Heart right ventricle (tissue), 16 donors: ENCODE measurements at regions of chr22 and their contacts with region 1.

Region 1: DNA sequence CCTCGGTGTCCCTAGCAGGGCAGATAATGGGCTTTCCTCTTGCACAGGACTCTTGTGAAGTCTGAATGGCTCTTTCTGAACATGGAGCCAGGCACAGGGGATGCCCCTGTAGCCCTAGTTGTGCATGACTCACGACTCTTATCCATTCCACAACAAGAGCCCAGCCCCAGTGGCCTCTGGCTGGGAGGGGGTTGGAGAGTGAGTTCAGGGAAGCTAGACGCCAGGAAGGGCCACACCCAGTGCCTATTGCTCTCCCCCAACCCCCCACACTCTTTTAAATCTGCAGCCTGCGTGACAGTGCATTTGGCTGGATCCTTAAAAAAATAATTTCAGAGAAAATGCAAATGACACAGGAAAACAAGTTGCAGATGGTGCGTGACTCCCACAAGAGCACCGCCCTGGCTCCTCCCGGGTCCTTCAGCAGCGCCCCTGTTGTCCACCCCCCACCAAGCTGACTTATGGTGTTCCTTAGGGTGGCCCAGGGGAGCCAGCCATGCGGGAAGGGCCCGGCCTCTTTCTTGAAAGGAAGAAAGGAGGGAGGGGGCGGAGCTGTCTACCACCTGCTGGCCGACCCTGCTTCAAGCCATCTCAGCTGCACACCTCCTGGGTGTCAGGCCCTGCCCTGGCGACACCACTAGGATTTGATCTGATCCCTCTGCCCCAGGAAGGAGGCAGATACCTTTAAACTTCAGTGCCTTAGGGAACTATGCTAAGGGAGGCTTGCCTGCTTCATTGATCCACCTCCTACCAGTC is 74.7 kb downstream of the MN1 start:
- DNase-seq: peak; percentile 70 to 79
- ATAC-seq: peak; percentile 80 to 96 (median 94)
- H3K4me3 ChIP-seq: peak overlapping the region in 3 of 10 donors; percentile 8 to 12 (median 8)
- H3K27ac ChIP-seq: peak overlapping the region; percentile 70 to 92 (median 90)
- H3K4me1 ChIP-seq: peaks cover 4 to 35% (median 20%) of the 10 kb centered on the region in 9 donors
- H3K27me3 ChIP-seq: no peaks in the 10 kb centered on the region
- CTCF ChIP-seq: peak in 1 of 9 donors; percentile 6

Region 2: GRCh38 chr22:27682437-27682836 is 44.4 kb before region 1 on chr22:
- intact Hi-C with region 1: no loop called
- DNase-seq: no peak
- ATAC-seq: no peak
- H3K4me3 ChIP-seq: no peak overlapping the region
- H3K27ac ChIP-seq: no peak overlapping the region
- H3K4me1 ChIP-seq: peaks cover 2 to 27% (median 21%) of the 10 kb centered on the region in 9 donors
- H3K27me3 ChIP-seq: no peaks in the 10 kb centered on the region
- CTCF ChIP-seq: peak in 4 of 9 donors; percentile 14 to 22 (median 17)

Region 3: DNA sequence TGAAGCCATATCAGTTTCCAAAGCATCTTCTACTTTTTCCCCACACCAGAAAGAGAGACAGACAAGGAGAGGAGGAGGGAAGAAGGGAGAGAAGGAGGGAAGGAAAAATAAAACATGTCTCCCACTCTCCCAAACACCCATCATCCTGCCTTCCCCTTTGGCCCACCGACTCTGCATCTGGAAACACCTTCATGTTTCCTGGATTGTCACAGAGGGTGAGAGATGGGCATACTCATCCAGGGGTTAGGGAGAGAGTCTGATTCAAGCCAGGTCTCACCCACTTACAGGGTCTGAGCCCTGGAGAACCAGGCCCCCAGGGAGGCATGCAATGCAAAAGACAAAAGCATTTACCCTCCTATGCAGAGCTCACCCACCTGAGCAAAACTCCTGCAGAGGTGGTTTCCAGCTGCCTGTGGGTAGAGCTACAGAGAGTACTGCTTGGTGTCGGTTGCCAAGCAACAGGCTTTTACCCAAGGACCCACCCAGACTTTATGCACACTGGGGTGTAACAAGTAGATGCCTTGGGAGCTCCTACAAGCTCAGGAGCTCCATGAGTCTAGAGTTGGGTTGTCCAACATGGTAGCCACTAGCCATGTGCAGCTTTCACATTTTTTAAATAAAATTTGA is 41.3 kb after region 1 on chr22:
- intact Hi-C with region 1: no loop called
- DNase-seq: no peak
- ATAC-seq: no peak
- H3K4me3 ChIP-seq: no peak overlapping the region
- H3K27ac ChIP-seq: no peak overlapping the region
- H3K4me1 ChIP-seq: peaks cover 0 to 4% (median 0%) of the 10 kb centered on the region in 9 donors
- H3K27me3 ChIP-seq: no peaks in the 10 kb centered on the region
- CTCF ChIP-seq: no peak

Region 4: DNA sequence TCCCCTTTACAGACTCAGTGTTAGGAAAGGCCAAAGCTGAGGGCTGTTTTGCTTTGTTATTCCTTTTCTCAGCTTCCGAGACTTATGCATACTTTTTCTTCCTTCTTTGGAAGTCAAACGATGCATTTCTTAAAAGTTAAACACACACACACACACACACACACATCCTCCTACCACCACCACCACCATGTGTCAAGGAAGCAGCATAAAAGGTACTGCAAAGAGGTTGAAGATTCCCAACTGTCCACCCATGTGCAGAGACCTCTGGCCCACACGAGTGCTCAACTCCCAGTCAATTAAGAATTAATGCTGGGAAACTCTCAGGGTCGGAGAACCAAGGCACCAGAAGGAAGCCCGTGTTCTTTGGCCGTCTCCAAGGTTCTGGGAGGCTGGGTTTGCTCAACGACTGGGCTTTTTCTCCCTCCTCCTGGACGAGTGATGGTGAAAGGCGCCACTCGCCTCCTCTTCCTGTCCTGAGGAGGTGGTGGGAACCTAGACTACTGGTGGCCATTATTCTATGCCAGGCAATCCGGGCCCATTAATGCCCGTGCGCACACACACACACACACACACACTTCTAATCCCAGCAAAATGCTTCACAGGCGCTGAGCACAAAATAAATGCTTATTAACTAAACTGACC is 59.5 kb after region 1 on chr22:
- intact Hi-C with region 1: loop called in 2 of 10 experiments (anchors 5 to 10 kb)
- DNase-seq: no peak
- ATAC-seq: peak in 4 of 8 donors; percentile 20 to 27 (median 20)
- H3K4me3 ChIP-seq: peak overlapping the region in 1 of 10 donors; percentile 25
- H3K27ac ChIP-seq: peak overlapping the region in 7 of 10 donors; percentile 1 to 75 (median 59)
- H3K4me1 ChIP-seq: peaks cover 0 to 51% (median 13%) of the 10 kb centered on the region in 9 donors
- H3K27me3 ChIP-seq: peaks cover 0 to 5% (median 0%) of the 10 kb centered on the region in 7 donors
- CTCF ChIP-seq: no peak

Region 5: GRCh38 chr22:27799334-27800249 is 72.7 kb after region 1 on chr22:
- intact Hi-C with region 1: loop called in 4 of 10 experiments (anchors 2 to 10 kb)
- DNase-seq: peak in 1 of 2 donors; percentile 57
- ATAC-seq: peak in 2 of 8 donors; percentile 7 to 14
- H3K4me3 ChIP-seq: peak overlapping the region; percentile 57 to 93 (median 73)
- H3K27ac ChIP-seq: peak overlapping the region; percentile 77 to 95 (median 87)
- H3K4me1 ChIP-seq: peaks cover 3 to 59% (median 36%) of the 10 kb centered on the region in 9 donors
- H3K27me3 ChIP-seq: peaks cover 0 to 79% (median 15%) of the 10 kb centered on the region in 7 donors
- CTCF ChIP-seq: no peak

Region 6: DNA sequence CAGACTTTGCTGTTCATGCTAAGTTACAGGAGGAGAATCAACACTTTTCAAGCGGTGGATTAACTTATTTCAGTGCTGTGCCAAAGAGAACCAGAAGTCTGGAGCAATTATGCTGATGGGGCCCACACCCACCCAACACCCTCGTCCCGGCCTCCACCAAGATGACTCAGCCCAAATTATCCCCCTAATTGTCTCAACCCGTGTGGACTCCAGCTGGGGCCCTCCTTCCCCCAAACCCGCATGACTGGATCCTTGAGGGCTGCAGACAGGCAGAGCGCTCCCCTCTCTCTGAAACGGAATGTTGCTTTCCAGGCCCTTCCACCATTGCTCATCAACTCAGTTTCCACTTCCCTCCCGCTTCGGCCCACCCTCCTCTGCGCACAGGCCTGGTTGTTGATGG is 109.3 kb after region 1 on chr22:
- intact Hi-C with region 1: no loop called
- DNase-seq: no peak
- ATAC-seq: no peak
- H3K4me3 ChIP-seq: no peak overlapping the region
- H3K27ac ChIP-seq: no peak overlapping the region
- H3K4me1 ChIP-seq: no peaks in the 10 kb centered on the region
- H3K27me3 ChIP-seq: no peaks in the 10 kb centered on the region
- CTCF ChIP-seq: no peak

Region 7: GRCh38 chr22:27972732-27973698 is 246.1 kb after region 1 on chr22:
- intact Hi-C with region 1: no loop called
- DNase-seq: no peak
- ATAC-seq: no peak
- H3K4me3 ChIP-seq: no peak overlapping the region
- H3K27ac ChIP-seq: no peak overlapping the region
- H3K4me1 ChIP-seq: peaks cover 0 to 10% (median 0%) of the 10 kb centered on the region in 9 donors
- H3K27me3 ChIP-seq: no peaks in the 10 kb centered on the region
- CTCF ChIP-seq: no peak